ENCODE measurements at regions of chr19 and their contacts with region 1.

Region 1: GRCh38 chr19:51926784-51927742 is at the start of gene ZNF613:
- DNase-seq: peak; percentile 72 to 93 (median 79)
- ATAC-seq: peak; percentile 88
- H3K4me3 ChIP-seq: peak within 1 kb of the TSS; percentile 78
- H3K4me3 Mint-ChIP-seq: peak within 1 kb of the TSS; percentile 97
- H3K27ac ChIP-seq: peak within 1 kb of the TSS; percentile 55 to 60
- H3K27ac Mint-ChIP-seq: peak within 1 kb of the TSS; percentile 86
- H3K4me1 ChIP-seq: peaks cover 17% of the 10 kb centered on the region
- H3K4me1 Mint-ChIP-seq: peaks cover 36% of the 10 kb centered on the region
- H3K27me3 ChIP-seq: no peaks in the 10 kb centered on the region
- H3K27me3 Mint-ChIP-seq: no peaks in the 10 kb centered on the region
- CTCF ChIP-seq: peak; percentile 22
- total RNA-seq, gene ZNF613: 0.67 to 1.3 TPM

Region 2: DNA sequence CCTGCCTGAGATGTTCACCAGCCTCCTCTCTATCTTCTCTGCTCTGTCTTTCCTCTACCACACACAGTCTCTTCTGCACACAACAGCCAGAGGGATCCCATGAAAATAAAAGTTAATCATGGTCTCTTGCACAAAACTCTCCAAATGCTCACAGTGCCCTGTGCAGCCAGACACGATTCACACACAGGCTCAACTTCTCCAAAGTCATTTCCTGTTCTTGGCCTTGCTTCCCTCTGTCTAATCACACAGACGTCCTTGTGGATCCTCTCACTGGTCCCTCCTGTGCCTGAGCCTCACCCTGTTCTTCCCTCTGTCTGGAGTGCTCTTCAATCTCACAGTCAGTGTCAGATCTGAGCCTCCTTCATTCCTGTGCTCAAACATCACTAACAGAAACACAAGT is 433.3 kb before region 1 on chr19:
- CTCF ChIA-PET with region 1: no interaction called
- POLR2A ChIA-PET with region 1: no interaction called
- intact Hi-C with region 1: no loop called
- DNase-seq: no peak
- ATAC-seq: no peak
- H3K4me3 ChIP-seq: no peak overlapping the region
- H3K4me3 Mint-ChIP-seq: no peak overlapping the region
- H3K27ac ChIP-seq: no peak overlapping the region
- H3K27ac Mint-ChIP-seq: no peak overlapping the region
- H3K4me1 ChIP-seq: no peaks in the 10 kb centered on the region
- H3K4me1 Mint-ChIP-seq: no peaks in the 10 kb centered on the region
- H3K27me3 ChIP-seq: peaks cover 0 to 2% of the 10 kb centered on the region in 2 experiments
- H3K27me3 Mint-ChIP-seq: peaks cover 20% of the 10 kb centered on the region
- CTCF ChIP-seq: no peak

Region 3: GRCh38 chr19:51887522-51888498 is 39.3 kb before region 1 on chr19 and contains the start of gene ZNF577:
- CTCF ChIA-PET with region 1: no interaction called
- POLR2A ChIA-PET with region 1: no interaction called
- intact Hi-C with region 1: loop called in 1 of 2 experiments (anchors 5 kb)
- DNase-seq: peak; percentile 27 to 85 (median 60)
- ATAC-seq: peak; percentile 89
- H3K4me3 ChIP-seq: peak within 1 kb of the TSS; percentile 51
- H3K4me3 Mint-ChIP-seq: peak within 1 kb of the TSS; percentile 97
- H3K27ac ChIP-seq: peak within 1 kb of the TSS in 1 of 2 donors; percentile 20
- H3K27ac Mint-ChIP-seq: peak within 1 kb of the TSS; percentile 87
- H3K4me1 ChIP-seq: peaks cover 7% of the 10 kb centered on the region
- H3K4me1 Mint-ChIP-seq: peaks cover 17% of the 10 kb centered on the region
- H3K27me3 ChIP-seq: no peaks in the 10 kb centered on the region
- H3K27me3 Mint-ChIP-seq: no peaks in the 10 kb centered on the region
- CTCF ChIP-seq: no peak
- total RNA-seq, gene ZNF577: 8.0 to 10.3 TPM

Region 4: DNA sequence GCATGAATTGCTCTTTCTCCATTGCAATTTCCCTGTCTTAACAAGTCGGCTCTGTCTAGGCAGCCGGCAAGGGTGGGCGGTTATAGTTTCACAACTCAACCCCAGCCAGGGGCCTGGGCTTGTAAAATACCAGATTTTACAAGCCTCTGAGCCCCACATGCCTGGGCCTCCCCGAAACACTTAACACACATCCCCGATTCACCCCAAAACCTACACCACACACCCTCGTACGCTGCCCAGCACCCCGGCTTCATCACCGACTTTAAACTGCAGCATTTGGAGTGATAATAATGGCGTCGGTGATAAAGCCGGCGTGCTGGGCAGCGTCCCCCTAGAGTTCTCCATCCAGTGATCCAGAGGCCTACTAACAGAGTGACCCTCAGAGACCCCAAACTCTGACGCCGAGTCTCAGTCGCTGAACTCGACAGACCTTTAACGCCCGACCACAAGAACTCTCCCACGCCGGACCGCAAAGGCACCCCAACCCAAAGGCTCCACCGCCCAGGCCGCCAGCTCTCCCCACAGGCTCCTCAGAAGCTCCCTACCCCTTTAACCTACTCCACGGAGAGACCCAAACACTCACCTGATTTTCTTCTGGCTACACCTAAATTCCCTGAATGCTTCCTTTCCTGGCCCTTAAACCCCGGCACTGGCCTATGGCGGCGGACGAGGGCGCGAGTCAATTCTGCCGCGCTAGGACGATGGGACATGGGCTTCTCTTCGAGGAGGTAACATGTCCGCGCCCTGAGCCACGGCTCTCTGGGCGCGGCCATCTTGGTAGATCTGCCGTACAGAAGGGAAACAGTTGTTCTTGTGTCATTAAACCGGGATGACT is 22.5 kb before region 1 on chr19 and contains the start of gene ZNF649:
- CTCF ChIA-PET with region 1: no interaction called
- POLR2A ChIA-PET with region 1: interaction called, 3 read pairs
- intact Hi-C with region 1: loop called (anchors 1 kb)
- DNase-seq: peak; percentile 69 to 90 (median 74)
- ATAC-seq: peak; percentile 91
- H3K4me3 ChIP-seq: peak within 1 kb of the TSS; percentile 92
- H3K4me3 Mint-ChIP-seq: peak within 1 kb of the TSS; percentile 100
- H3K27ac ChIP-seq: peak within 1 kb of the TSS; percentile 53 to 58
- H3K27ac Mint-ChIP-seq: peak within 1 kb of the TSS; percentile 89
- H3K4me1 ChIP-seq: peaks cover 14% of the 10 kb centered on the region
- H3K4me1 Mint-ChIP-seq: peaks cover 29% of the 10 kb centered on the region
- H3K27me3 ChIP-seq: peaks cover 6 to 9% of the 10 kb centered on the region in 2 experiments
- H3K27me3 Mint-ChIP-seq: peaks cover 36% of the 10 kb centered on the region
- CTCF ChIP-seq: no peak
- total RNA-seq, gene ZNF649: 13.0 to 13.2 TPM

Region 5: GRCh38 chr19:52028027-52028779 is 101.1 kb after region 1 on chr19 and contains the start of gene ZNF614:
- CTCF ChIA-PET with region 1: no interaction called
- POLR2A ChIA-PET with region 1: no interaction called
- intact Hi-C with region 1: loop called in 1 of 2 experiments (anchors 5 kb)
- DNase-seq: peak; percentile 71 to 92 (median 82)
- ATAC-seq: peak; percentile 85
- H3K4me3 ChIP-seq: peak within 1 kb of the TSS; percentile 85
- H3K4me3 Mint-ChIP-seq: peak within 1 kb of the TSS; percentile 95
- H3K27ac ChIP-seq: peak within 1 kb of the TSS; percentile 89 to 90
- H3K27ac Mint-ChIP-seq: peak within 1 kb of the TSS; percentile 93
- H3K4me1 ChIP-seq: peaks cover 16% of the 10 kb centered on the region
- H3K4me1 Mint-ChIP-seq: peaks cover 38% of the 10 kb centered on the region
- H3K27me3 ChIP-seq: no peaks in the 10 kb centered on the region
- H3K27me3 Mint-ChIP-seq: no peaks in the 10 kb centered on the region
- CTCF ChIP-seq: no peak
- total RNA-seq, gene ZNF614: 9.7 to 10.5 TPM